ENCODE measurements at regions of chr2 and their contacts with region 1.

Region 1: DNA sequence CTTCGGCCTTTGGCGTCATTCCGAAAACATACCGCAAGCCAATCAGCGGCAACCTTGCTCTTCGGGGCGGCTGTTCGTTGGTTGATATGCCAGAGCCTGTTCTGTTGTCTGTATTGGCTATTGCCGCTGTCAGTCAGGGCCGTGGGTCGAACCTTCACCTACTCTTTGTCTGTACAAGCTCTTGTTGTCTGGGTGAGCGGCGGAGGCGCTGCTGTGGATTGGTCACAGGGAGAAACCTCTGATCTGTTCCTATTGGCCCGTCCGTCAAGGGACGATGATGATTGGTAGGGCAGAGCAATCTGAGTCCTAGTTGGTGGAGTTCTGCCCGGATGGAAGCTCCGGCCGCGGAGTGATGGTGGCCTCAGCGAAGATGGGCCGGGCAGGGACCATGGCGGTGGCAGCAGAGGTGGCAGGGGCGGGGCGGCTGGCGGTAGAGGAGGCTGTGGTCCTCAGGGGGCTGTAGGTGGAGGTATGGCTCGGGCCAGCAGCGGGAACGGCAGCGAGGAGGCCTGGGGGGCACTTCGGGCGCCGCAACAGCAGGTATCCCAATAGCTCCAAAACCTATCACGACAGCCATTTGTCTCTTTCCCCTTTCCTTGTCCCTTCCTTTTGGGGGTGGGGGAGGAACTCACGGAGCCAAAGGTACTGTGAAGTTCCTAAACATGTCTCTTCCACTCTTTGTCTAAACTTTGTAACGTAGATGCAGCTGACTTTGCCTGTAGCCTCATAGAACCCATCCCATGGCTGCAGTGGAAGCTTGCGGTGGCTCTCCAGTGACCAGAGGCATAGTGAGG is at the start of gene WBP1:
- DNase-seq: peak; percentile 99
- H3K4me3 Mint-ChIP-seq: peak within 1 kb of the TSS; percentile 98
- H3K27ac Mint-ChIP-seq: peak within 1 kb of the TSS; percentile 98
- H3K4me1 Mint-ChIP-seq: peaks cover 61% of the 10 kb centered on the region
- H3K27me3 Mint-ChIP-seq: no peaks in the 10 kb centered on the region
- total RNA-seq, gene WBP1: 32.6 and 35.3 TPM in 2 replicates

Region 2: DNA sequence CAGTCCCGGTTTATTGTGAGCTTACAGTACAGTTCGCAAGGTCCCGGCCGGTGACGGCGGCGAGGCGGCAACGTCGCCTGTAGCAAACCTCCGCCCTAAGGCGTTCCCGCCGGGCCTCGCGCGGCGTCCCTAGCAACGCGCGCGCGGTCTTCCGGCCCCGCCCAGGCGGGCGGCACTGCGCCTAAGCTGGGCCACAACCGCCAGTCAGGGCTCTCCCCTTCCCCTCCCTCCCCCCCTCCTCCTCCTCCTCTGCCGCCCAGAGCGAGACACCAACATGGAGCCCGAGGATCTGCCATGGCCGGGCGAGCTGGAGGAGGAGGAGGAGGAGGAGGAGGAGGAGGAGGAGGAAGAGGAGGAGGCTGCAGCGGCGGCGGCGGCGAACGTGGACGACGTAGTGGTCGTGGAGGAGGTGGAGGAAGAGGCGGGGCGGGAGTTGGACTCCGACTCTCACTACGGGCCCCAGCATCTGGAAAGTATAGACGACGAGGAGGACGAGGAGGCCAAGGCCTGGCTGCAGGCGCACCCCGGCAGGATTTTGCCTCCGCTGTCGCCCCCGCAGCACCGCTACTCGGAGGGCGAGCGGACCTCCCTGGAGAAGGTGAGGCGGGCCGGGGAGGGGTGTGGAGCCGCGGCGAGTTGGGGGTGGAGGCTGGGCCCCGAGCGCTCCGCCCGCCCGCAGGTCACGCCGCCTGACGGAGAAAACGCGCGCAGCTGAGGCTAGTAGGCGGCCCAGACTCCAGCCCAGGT is 1072.6 kb before region 1 on chr2 and contains the start of gene ALMS1:
- intact Hi-C with region 1: loop called (anchors 2 kb)
- DNase-seq: peak; percentile 88
- H3K4me3 Mint-ChIP-seq: peak within 1 kb of the TSS; percentile 92
- H3K27ac Mint-ChIP-seq: peak within 1 kb of the TSS; percentile 90
- H3K4me1 Mint-ChIP-seq: peaks cover 37% of the 10 kb centered on the region
- H3K27me3 Mint-ChIP-seq: no peaks in the 10 kb centered on the region
- total RNA-seq, gene ALMS1: 18.2 and 19.4 TPM in 2 replicates

Region 3: DNA sequence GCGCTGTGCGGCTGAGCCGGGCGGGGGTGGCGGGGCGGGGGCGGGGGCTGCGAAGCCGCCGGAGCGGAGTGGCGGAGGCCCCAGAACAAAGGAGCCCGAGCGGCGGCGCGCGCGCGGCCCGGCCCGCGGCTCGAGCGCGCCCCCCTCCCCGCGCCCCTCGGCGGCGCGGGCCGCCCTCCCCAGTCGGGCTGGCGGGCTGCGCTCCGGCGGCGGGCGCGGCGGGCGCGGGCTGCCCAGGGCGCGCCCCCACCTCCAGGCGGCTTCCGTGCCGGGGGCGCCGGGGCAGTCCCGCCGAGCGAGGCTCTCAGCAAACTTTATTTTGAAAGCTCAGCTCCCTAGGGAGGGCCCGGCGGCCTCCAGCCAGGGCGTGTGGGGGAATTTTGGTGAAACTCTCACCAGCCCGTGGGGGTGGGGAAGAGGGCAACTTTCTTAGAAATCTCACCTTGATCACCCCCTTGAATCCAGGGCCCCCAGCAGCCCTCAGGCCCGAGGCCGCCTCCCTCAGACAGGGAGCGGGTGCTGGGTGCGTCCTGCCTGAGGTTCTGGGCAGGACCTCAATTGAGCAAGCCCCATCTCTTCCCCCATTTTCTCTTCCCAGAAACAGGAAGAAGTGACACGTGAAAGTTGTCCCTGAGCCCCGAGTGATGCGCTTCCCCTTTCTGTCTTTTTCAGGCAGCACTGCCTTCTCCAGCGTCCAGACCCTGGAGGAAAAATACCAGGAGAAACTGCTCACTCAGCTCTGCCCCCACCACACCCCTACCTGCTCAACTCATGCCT is 472.8 kb before region 1 on chr2:
- intact Hi-C with region 1: loop called (anchors 10 kb)
- DNase-seq: no peak
- H3K4me3 Mint-ChIP-seq: peak overlapping the region; percentile 81
- H3K27ac Mint-ChIP-seq: peak overlapping the region; percentile 91
- H3K4me1 Mint-ChIP-seq: peaks cover 81% of the 10 kb centered on the region
- H3K27me3 Mint-ChIP-seq: peaks cover 29% of the 10 kb centered on the region

Region 4: DNA sequence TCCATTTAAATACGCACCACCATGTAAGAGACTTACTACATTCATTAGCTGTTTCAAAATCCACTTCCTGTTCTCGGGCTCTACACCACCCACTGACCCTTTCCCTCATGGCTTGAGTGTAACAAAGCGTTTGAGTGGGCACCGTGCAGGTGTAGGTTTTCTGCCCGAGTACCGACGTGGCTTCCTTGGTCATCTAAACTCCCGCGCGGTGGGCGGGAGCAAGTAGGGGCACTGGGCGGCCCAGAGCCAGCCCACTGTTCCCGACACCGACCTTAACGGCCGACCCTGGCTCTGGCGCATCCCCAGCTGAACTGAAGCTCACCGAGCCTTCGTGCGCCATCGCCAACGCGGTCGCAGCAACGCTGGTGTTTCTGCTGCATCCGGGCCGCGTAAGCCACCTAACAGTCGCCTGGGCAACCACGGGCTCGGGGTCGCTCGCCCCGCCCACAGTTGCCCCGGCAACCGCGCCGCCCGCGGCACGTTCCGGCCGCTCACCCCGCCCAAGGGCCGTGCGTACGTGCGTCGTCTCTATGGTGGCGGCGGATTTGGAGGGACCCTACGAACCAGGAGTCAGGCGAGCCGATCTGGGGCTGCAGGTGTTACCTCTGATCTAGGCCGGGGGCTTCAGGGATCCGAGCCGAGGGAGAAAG is 37.0 kb before region 1 on chr2 and contains the starts of genes C2orf81 and WDR54:
- intact Hi-C with region 1: loop called (anchors 1 kb)
- DNase-seq: peak; percentile 95
- H3K4me3 Mint-ChIP-seq: peak within 1 kb of the TSS; percentile 98
- H3K27ac Mint-ChIP-seq: peak within 1 kb of the TSS; percentile 99
- H3K4me1 Mint-ChIP-seq: peaks cover 35% of the 10 kb centered on the region
- H3K27me3 Mint-ChIP-seq: no peaks in the 10 kb centered on the region
- total RNA-seq, gene C2orf81: 1.9 and 2.4 TPM in 2 replicates
- total RNA-seq, gene WDR54: 56.4 and 58.6 TPM in 2 replicates

Region 5: GRCh38 chr2:74507145-74507925 is 49.0 kb after region 1 on chr2 and contains the start of gene PCGF1:
- intact Hi-C with region 1: loop called (anchors 1 kb)
- DNase-seq: peak; percentile 96
- H3K4me3 Mint-ChIP-seq: peak within 1 kb of the TSS; percentile 96
- H3K27ac Mint-ChIP-seq: peak within 1 kb of the TSS; percentile 99
- H3K4me1 Mint-ChIP-seq: peaks cover 55% of the 10 kb centered on the region
- H3K27me3 Mint-ChIP-seq: peaks cover 24% of the 10 kb centered on the region
- total RNA-seq, gene PCGF1: 41.9 and 45.0 TPM in 2 replicates

Region 6: DNA sequence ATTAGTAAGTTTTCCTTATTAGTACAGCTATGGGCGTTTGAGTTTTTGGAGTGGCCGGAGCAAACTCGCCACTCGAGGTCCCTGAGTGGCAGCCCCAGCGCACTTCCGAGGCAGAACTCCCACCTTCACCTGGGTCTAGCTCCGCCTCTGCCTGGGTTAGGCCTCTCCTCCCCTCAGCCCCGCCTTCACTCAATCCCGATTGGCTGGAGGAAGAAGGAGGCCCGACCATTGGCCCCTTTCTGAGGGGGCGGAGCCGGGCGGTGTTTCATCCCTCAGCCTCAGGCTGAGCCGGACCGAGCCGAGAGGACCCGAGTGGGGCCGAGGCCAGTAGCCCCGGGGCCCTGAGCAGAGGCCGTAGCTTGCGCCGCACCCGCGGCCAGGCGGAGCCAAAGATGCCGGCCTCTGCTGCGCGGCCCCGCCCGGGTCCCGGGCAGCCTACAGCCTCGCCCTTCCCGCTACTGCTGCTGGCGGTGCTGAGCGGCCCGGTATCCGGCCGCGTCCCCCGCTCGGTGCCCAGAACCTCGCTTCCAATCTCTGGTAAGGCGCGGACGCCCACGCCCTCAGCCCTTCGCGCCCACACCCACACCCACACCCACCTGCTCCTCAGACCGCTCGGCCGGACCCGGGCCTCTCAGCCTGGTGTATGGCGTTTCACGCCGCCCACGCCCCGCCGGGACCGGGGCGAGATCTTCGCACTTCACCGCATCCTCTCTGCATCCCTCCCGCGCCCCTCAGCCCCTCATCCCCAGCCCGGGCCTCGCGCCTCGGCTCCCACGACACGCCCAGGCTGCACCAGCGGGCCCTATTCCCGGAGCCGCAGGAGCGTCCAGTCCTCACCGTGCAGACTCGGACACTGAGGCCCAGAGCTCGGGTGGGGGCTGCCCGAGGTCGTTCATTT is 195.9 kb after region 1 on chr2 and contains the start of gene SEMA4F:
- intact Hi-C with region 1: loop called (anchors 1 kb)
- DNase-seq: peak; percentile 92
- H3K4me3 Mint-ChIP-seq: peak within 1 kb of the TSS; percentile 89
- H3K27ac Mint-ChIP-seq: peak within 1 kb of the TSS; percentile 4
- H3K4me1 Mint-ChIP-seq: peaks cover 12% of the 10 kb centered on the region
- H3K27me3 Mint-ChIP-seq: peaks cover 37% of the 10 kb centered on the region
- total RNA-seq, gene SEMA4F: 2.4 and 3.2 TPM in 2 replicates

Measured in activated T-helper 1 cell treated with anti-CD3 and anti-CD28 coated beads, Interleukin-12 subunit alpha, Interleukin-12 subunit beta, Interleukin-2, Interleukin-4 antibody, amounts not matched to agents 30 ng/mL and 10 ng/mL and 1 ng/mL, durations not matched to agents 14 hours and 24 hours and 36 hours (primary cell).